GM23248 (cell line): ENCODE measurements at regions of chr15 and their contacts with region 1.

Region 1: GRCh38 chr15:58227706-58228543 is 89.7 kb downstream of the AQP9 start:
- DNase-seq: peak; percentile 87
- H3K4me3 ChIP-seq: no peak overlapping the region
- H3K27ac ChIP-seq: peak overlapping the region; percentile 24; the same call in 1 of the 2 replicates
- H3K4me1 ChIP-seq: peaks cover 23% of the 10 kb centered on the region
- H3K27me3 ChIP-seq: no peaks in the 10 kb centered on the region

Region 2: GRCh38 chr15:56950979-56951378 is 1276.9 kb before region 1 on chr15:
- in situ Hi-C with region 1: no loop called
- DNase-seq: no peak
- H3K4me3 ChIP-seq: no peak overlapping the region
- H3K27ac ChIP-seq: no peak overlapping the region
- H3K4me1 ChIP-seq: peaks cover 11% of the 10 kb centered on the region
- H3K27me3 ChIP-seq: no peaks in the 10 kb centered on the region

Region 3: GRCh38 chr15:58322253-58322652 is 94.3 kb after region 1 on chr15:
- in situ Hi-C with region 1: no loop called
- DNase-seq: no peak
- H3K4me3 ChIP-seq: no peak overlapping the region
- H3K27ac ChIP-seq: no peak overlapping the region
- H3K4me1 ChIP-seq: no peaks in the 10 kb centered on the region
- H3K27me3 ChIP-seq: no peaks in the 10 kb centered on the region

Region 4: DNA sequence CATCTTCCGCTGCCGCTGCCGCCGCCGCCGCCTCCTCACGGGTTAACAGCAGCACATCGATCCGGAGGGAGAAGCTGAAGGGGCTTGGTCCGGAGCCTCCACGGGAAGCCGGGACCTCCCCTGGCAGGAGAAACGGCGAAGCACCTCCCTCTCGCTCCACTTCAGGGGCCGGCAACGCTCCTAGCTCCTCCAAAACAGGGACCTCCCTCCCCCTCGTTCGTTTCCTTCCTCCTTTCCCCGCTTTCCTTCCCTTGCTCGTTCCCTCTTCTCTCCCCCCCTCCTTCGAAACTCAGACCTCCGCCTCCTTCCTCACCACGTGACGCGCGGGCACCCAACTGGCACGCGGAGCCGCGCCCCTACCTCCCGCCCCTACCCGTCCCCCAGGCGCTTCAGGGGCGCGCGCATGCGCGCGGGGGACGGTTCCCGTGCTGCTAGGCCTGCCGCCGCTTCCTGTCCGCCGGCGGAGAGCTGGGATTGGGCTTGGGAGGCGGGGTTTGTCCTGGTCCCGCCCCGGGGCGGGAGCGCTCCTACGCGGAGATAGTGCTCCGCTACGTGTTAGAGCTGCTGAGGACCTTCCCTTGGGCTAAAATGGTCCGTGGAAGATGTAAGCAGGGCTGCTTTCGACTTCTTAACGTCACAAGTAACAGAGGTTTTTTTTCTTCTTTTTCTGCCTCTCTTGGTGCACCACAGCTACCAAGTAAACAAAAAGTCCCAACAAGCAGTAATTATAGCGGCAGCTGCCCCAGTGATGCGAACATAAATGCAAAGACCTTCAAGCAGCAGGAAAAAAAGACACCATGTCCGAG is 521.8 kb after region 1 on chr15 and contains the start of gene ADAM10:
- in situ Hi-C with region 1: loop called (anchors 10 kb)
- DNase-seq: peak; percentile 100
- H3K4me3 ChIP-seq: peak within 1 kb of the TSS; percentile 96
- H3K27ac ChIP-seq: peak within 1 kb of the TSS; percentile 99
- H3K4me1 ChIP-seq: peaks cover 18% of the 10 kb centered on the region
- H3K27me3 ChIP-seq: no peaks in the 10 kb centered on the region
- total RNA-seq, gene ADAM10: 171 and 193 TPM in 2 replicates

Region 5: DNA sequence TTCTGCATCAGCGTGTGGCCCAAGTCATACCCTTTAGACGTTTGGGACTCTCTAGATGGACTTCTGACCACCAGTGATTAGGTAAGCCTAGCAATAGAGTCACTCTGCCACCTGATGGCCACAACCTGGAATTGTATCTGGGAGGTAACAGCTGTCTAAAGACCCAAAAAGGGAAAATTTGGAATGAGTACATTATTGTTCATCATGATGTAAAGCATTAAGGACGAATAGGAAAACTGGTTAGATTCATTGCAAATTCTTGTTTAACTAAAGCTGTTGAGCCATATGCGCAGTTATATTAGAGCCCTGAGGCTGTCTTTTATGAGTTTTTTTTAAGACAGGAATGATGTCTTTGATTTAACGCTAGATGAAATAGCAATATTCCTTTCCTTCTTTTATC is 1273.7 kb after region 1 on chr15:
- in situ Hi-C with region 1: loop called (anchors 25 kb)
- DNase-seq: peak; percentile 70
- H3K4me3 ChIP-seq: no peak overlapping the region
- H3K27ac ChIP-seq: no peak overlapping the region
- H3K4me1 ChIP-seq: no peaks in the 10 kb centered on the region
- H3K27me3 ChIP-seq: no peaks in the 10 kb centered on the region